ENCODE measurements at regions of chr1 and their contacts with region 1.

Region 1: DNA sequence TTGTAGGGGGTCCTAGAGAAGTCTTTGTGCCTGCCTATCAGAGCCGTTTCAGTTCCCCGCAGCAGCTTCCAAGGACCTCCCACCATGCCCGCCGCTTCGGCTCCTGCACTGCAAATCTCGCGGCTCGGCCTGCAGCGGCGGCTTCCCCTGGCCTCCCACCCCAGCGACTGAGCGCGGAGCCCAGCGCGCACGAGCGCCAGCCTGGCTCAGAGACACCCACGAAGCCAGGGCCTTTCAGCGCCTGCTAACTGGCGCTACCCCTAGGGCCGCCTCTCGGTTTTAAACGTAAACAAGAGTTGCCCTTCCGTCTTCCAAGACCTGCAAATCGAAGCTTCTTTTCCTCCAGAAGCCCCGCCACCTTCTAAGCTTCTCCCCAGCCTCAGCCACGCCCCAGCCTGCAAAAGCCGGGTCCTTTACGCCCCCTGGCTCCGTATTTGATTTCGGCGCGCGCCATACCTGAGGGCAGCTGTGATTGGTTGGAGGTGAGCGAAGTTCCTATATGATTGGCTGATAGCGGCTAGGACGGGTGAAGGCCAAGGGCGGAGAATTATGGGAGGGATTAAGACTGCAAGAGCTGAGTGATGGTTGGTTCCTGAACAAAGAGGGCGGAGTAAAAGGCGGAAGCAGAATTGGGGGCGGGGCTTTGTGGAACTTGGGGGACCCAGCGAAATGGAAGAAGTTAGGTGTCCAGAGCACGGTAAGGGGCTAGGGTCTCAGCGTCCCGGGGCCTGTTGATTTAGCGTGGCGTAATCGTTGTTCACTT is at the start of gene TTF2:
- DNase-seq: peak; percentile 99
- ATAC-seq: peak; percentile 94
- H3K4me3 Mint-ChIP-seq: no peak within 1 kb of the TSS
- H3K27ac Mint-ChIP-seq: no peak within 1 kb of the TSS
- H3K4me1 Mint-ChIP-seq: peaks cover 57% of the 10 kb centered on the region
- H3K27me3 Mint-ChIP-seq: no peaks in the 10 kb centered on the region
- total RNA-seq, gene TTF2: 121 to 135 TPM

Region 2: GRCh38 chr1:116574581-116575291 is 485.1 kb before region 1 on chr1:
- CTCF ChIA-PET with region 1: interaction called, 14 read pairs
- POLR2A ChIA-PET with region 1: interaction called, 5 read pairs
- DNase-seq: peak; percentile 75
- ATAC-seq: no peak
- H3K4me3 Mint-ChIP-seq: no peak overlapping the region
- H3K27ac Mint-ChIP-seq: no peak overlapping the region
- H3K4me1 Mint-ChIP-seq: peaks cover 31% of the 10 kb centered on the region
- H3K27me3 Mint-ChIP-seq: peaks cover 5% of the 10 kb centered on the region

Region 3: GRCh38 chr1:116754198-116754977 is 305.5 kb before region 1 on chr1 and contains the start of gene CD2:
- CTCF ChIA-PET with region 1: interaction called, 5 read pairs
- POLR2A ChIA-PET with region 1: interaction called, 26 read pairs
- DNase-seq: peak; percentile 79
- ATAC-seq: peak; percentile 75
- H3K4me3 Mint-ChIP-seq: peak within 1 kb of the TSS; percentile 99
- H3K27ac Mint-ChIP-seq: peak within 1 kb of the TSS; percentile 98
- H3K4me1 Mint-ChIP-seq: peaks cover 42% of the 10 kb centered on the region
- H3K27me3 Mint-ChIP-seq: no peaks in the 10 kb centered on the region
- total RNA-seq, gene CD2: 186 to 189 TPM

Region 4: GRCh38 chr1:116806245-116806644 is 253.6 kb before region 1 on chr1:
- CTCF ChIA-PET with region 1: no interaction called
- POLR2A ChIA-PET with region 1: interaction called, 14 read pairs
- DNase-seq: peak; percentile 56
- ATAC-seq: peak; percentile 35
- H3K4me3 Mint-ChIP-seq: peak overlapping the region; percentile 58
- H3K27ac Mint-ChIP-seq: peak overlapping the region; percentile 92
- H3K4me1 Mint-ChIP-seq: peaks cover 91% of the 10 kb centered on the region
- H3K27me3 Mint-ChIP-seq: no peaks in the 10 kb centered on the region

Region 5: GRCh38 chr1:116943438-116943837 is 116.4 kb before region 1 on chr1:
- CTCF ChIA-PET with region 1: no interaction called
- POLR2A ChIA-PET with region 1: interaction called, 10 read pairs
- DNase-seq: no peak
- ATAC-seq: no peak
- H3K4me3 Mint-ChIP-seq: no peak overlapping the region
- H3K27ac Mint-ChIP-seq: peak overlapping the region; percentile 37
- H3K4me1 Mint-ChIP-seq: peaks cover 24% of the 10 kb centered on the region
- H3K27me3 Mint-ChIP-seq: no peaks in the 10 kb centered on the region

Region 6: DNA sequence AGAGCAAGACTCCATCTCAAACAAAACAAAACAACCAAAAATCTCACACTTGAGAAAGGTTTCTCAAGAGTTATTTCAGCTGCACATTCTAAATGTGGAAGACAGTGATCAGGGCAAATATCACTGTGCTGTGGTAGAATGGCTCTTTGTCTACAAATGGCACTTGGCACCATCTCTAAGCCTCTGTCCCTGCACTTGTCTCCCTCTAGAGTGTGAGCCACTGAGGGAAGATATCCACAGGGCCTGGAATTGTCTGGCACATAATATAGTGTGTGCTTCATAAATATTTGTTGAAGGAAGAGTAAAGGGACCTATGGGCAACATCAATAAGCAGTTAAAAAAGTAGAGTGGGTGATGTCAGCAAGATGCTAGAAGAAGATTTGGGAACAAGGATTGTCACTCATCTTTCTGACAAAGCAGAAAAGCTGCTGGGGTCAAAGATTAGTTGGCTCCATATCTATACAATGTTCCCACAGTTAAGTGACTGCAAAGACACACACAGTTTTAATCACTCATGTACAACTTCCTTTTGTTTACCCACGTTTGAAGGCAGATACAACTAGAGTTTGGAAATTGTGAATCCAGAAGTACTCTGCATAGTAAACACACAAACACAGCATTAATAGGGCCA is 39.2 kb before region 1 on chr1:
- CTCF ChIA-PET with region 1: no interaction called
- POLR2A ChIA-PET with region 1: no interaction called
- DNase-seq: no peak
- ATAC-seq: no peak
- H3K4me3 Mint-ChIP-seq: no peak overlapping the region
- H3K27ac Mint-ChIP-seq: no peak overlapping the region
- H3K4me1 Mint-ChIP-seq: no peaks in the 10 kb centered on the region
- H3K27me3 Mint-ChIP-seq: no peaks in the 10 kb centered on the region

Region 7: GRCh38 chr1:117128323-117129079 is 68.6 kb after region 1 on chr1:
- CTCF ChIA-PET with region 1: interaction called, 10 read pairs
- POLR2A ChIA-PET with region 1: interaction called, 8 read pairs
- DNase-seq: no peak
- ATAC-seq: no peak
- H3K4me3 Mint-ChIP-seq: no peak overlapping the region
- H3K27ac Mint-ChIP-seq: no peak overlapping the region
- H3K4me1 Mint-ChIP-seq: no peaks in the 10 kb centered on the region
- H3K27me3 Mint-ChIP-seq: peaks cover 19% of the 10 kb centered on the region

Measured in activated CD8-positive, alpha-beta T cell treated with anti-CD3 and anti-CD28 coated beads, Interleukin-2, amount 10 ng/mL, durations not matched to agents 7 days and 5 days (primary cell).